ENCODE measurements at regions of chr9 and their contacts with region 1.

Region 1: GRCh38 chr9:104927912-104928740 is at the start of gene ABCA1:
- DNase-seq: no peak
- H3K4me3 ChIP-seq: peak within 1 kb of the TSS; percentile 73
- CTCF ChIP-seq: no peak

Region 2: DNA sequence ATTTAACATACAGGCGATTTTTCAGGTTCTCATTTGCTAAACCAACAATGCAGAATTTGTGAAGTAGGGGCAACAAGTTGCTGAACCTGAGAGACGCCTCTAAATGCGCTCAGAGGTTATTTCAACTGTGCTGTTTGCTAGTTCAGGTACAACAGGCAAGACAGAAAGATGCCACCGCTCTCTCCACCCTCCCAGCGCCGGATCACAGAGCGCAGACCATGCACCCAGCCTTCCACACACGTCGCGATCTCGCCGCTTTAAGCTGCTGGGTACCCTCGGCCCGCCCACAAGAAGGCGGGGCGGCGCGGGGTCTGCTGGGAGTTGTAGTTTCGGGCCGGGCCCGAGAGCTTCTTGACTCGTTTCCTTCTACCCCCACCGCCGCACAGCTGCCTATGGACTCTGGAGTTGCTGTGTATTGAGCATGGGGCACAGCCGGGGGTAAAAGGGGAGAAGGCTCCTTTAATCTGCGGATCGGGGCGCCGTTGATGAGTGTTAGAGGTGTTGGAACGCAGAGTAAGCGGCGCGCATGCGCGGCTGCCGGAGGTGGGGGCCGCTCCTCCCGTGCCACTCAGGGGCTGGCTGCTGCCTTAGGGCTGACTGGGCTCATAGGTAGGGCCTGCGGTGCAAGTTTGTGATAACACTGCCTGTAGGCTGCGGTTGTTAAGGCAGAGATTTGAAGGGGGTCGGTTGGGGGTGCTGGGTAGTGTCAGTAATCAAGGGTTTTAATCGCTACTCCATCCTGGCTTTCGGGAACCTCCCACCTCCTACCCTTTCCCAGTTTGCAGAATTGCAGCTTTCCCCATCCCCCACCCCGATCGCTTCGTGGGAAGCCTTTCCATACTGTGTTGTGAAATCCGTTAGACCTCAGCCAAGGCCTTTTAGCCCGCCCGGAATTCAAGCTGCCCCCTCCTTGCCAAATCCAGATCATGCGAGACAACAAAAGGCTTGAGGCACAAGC is 40.2 kb after region 1 on chr9:
- CTCF ChIA-PET with region 1: interaction called, 10 read pairs
- POLR2A ChIA-PET with region 1: interaction called, 13 read pairs
- DNase-seq: peak; percentile 82
- H3K4me3 ChIP-seq: peak overlapping the region; percentile 95
- CTCF ChIP-seq: no peak

Region 3: DNA sequence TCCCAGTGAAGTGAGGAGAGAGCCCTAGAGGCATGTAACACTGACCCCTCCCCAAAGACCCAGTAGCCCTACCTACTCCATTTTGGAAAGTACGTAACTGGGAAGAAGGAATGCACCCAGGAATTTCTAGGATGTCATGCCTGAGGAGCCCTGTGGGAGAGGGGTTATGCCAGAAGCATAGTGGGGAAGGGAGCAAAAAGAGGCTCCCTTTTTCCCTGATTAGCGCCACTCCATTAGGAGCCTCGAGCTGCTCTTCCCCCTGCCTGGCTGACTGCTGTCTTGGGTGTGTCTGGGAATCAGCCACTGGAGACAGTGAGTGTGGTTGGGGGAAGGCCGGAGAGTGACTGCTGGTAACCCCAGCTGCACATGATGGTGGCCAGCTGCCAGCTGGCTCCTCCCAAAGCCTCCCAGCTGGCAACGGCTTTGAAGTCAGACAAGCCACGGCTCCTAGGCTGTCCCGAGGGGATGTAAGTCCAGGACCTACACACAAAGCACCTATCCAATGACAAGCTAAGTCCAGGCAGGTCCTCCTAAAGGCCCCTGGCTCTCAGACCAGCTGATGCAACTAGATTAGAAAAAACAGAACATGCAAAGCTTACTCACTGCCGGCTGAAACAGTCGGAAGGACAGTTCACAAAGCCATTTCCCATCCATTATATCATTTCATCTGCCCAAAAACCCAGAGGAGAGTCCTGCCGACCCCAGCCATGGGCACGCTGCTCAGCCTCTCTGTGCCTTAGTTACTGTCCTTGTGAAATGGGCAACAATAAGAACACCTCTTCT is 136.4 kb after region 1 on chr9:
- CTCF ChIA-PET with region 1: interaction called, 4 read pairs
- POLR2A ChIA-PET with region 1: interaction called, 17 read pairs
- DNase-seq: peak; percentile 92
- H3K4me3 ChIP-seq: no peak overlapping the region; the same call in 1 of the 2 replicates
- CTCF ChIP-seq: no peak

Measured in AG04449 (cell line).